AG04449 (cell line): ENCODE measurements at regions of chr3 and their contacts with region 1.

Region 1: DNA sequence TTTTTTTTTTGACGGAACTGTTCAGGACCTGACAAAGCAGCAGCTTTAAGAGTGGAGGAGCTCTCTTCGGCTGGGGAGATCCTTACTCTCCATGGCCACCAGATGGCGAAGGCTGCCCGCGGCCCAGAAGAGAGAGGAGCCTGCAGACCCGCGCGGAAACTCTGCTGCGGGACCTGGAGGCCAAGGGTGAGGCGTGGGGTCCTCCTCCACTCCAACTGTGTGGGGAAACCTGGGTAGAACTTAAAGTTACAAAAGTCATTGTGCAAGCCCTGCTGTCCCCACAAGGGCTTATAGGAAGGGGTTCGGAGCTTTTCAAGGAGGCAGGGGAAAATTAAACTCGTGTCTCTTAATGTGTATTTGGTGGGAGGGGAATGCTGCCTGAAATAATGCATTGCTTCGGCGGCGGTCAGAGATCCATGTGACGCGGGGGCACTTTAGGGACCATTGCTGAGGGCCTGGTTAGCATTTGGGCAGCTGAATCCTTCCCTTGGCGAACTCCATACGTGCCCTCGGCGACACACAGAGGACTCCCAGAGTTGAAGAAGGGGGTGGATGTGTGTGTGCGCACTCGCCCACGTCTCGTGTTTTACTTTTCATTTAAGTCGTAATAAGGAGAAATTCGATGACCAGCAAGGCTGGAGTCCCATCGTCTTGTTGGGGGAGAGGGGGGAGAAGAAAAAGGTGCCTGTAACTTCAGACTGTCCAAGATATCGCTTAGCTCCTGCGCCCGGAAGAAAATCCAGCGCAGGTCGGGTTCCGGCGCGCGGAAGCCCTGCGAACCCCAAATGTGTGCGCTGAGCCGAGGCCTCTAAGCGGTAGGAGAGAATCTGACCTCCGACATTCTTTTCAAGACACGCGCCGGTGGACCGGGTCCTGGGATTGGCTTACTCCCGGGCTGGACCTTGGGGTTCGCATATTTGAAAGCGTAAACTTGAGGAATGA is 9.7 kb downstream of the EOMES start:
- DNase-seq: peak; percentile 28
- H3K4me3 ChIP-seq: peak overlapping the region; percentile 58
- CTCF ChIP-seq: peak; percentile 91

Region 2: GRCh38 chr3:27312044-27312668 is 400.3 kb before region 1 on chr3:
- CTCF ChIA-PET with region 1: interaction called, 12 read pairs
- POLR2A ChIA-PET with region 1: no interaction called
- DNase-seq: peak; percentile 46
- H3K4me3 ChIP-seq: no peak overlapping the region
- CTCF ChIP-seq: peak; percentile 54

Region 3: DNA sequence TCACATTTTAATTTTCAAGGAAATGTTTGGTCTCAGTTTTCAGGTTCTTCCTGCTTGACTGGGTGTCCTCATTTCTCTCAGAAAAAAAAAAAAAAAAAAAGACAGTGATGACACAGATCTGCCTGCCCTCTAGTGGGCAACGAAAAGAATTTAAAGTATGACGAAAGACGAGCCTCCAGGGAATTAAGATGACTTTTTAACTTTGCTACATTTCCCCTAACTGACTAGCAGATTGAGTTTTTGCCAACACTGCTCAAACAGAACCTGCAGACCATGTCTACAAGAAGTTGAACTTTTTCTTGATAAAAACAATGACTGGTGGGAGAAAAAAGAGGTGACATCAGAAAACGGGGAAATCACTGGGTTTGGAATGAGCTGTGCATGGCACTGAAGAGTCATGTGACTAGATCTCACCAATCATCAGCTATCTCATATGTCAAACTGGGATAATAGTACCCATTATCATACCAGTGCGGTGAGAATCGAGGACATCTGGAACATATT is 31.1 kb before region 1 on chr3:
- CTCF ChIA-PET with region 1: interaction called, 13 read pairs
- POLR2A ChIA-PET with region 1: no interaction called
- DNase-seq: peak; percentile 54
- H3K4me3 ChIP-seq: no peak overlapping the region
- CTCF ChIP-seq: peak; percentile 24

Region 4: DNA sequence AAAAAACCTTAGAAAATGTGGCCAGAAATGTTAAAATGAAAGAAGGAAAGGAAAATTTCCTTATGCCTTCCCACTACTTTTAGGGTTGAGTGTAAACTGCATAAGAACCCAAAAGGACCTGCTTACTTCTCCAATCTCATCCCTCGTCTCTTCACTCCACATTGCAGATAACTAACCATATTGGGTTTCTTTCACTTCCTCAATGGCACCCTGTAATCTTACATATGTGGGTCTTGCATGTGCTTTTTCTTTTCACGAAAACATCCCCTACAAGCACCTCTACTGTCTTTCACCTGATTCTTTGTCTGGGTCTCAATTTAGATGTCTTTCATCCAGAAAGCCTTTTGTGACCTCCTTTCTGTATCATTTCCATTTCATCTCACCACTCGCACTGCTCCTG is 13.3 kb before region 1 on chr3:
- CTCF ChIA-PET with region 1: interaction called, 28 read pairs
- POLR2A ChIA-PET with region 1: no interaction called
- DNase-seq: no peak
- H3K4me3 ChIP-seq: no peak overlapping the region
- CTCF ChIP-seq: no peak

Region 5: DNA sequence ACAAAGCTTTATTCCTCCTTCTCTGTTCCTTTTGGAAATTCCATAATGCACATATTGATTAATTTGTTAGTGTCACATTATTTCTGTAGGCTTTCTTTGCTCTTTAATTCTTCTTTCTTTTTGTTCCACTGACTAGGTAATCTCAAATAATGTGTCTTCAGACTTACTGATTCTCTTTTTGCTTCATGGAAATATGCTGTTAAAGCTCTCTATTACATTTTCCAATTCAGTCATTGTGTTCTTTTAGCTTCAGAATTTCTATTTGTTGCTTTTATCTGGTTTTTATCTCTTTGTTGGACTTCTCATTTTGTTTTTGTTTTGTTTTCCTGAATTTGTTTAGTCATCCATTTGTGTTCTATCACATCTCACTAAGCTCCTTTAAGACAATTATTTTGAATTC is 156.7 kb after region 1 on chr3:
- CTCF ChIA-PET with region 1: no interaction called
- POLR2A ChIA-PET with region 1: no interaction called
- DNase-seq: no peak
- H3K4me3 ChIP-seq: no peak overlapping the region
- CTCF ChIP-seq: no peak

Region 6: DNA sequence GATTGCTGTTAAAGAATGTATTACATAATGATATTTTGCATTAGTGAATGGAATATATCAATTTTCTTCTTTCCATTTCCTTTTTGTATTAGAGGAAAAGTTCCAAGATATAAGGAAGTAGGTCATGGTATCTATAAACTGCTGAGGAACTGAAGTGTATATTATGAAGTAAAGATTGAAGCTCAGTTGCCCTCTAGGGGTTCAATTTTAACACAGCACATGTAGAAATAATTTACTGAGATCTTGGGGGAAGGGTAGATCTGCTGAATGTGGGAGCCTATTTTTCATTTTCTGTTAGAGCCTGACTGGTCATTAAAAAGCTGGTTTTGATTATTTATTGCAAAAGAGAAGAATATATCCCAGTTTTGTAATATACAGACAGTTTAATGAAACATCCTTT is 574.2 kb after region 1 on chr3:
- CTCF ChIA-PET with region 1: interaction called, 25 read pairs
- POLR2A ChIA-PET with region 1: no interaction called
- DNase-seq: peak; percentile 9
- H3K4me3 ChIP-seq: no peak overlapping the region
- CTCF ChIP-seq: peak; percentile 44

Region 7: GRCh38 chr3:28328188-28329151 is 616.1 kb after region 1 on chr3:
- CTCF ChIA-PET with region 1: interaction called, 91 read pairs
- POLR2A ChIA-PET with region 1: no interaction called
- DNase-seq: no peak
- H3K4me3 ChIP-seq: no peak overlapping the region
- CTCF ChIP-seq: peak; percentile 11